ENCODE measurements at regions of chr7 and their contacts with region 1.

Region 1: GRCh38 chr7:94374231-94374630 is 20.5 kb upstream of the COL1A2 start:
- DNase-seq: peak; percentile 93 to 95
- ATAC-seq: peak; percentile 93
- H3K4me3 ChIP-seq: peak overlapping the region in 1 of 2 donors; percentile 54
- H3K27ac ChIP-seq: peak overlapping the region; percentile 28 to 97
- H3K4me1 ChIP-seq: peaks cover 0 to 15% of the 10 kb centered on the region in 2 donors
- H3K27me3 ChIP-seq: no peaks in the 10 kb centered on the region

Region 2: GRCh38 chr7:94295850-94296249 is 78.4 kb before region 1 on chr7:
- intact Hi-C with region 1: loop called (anchors 2 kb)
- DNase-seq: no peak
- ATAC-seq: peak; percentile 85
- H3K4me3 ChIP-seq: peak overlapping the region in 1 of 2 donors; percentile 29
- H3K27ac ChIP-seq: peak overlapping the region; percentile 76 to 99
- H3K4me1 ChIP-seq: peaks cover 8 to 10% of the 10 kb centered on the region in 2 donors
- H3K27me3 ChIP-seq: no peaks in the 10 kb centered on the region

Region 3: DNA sequence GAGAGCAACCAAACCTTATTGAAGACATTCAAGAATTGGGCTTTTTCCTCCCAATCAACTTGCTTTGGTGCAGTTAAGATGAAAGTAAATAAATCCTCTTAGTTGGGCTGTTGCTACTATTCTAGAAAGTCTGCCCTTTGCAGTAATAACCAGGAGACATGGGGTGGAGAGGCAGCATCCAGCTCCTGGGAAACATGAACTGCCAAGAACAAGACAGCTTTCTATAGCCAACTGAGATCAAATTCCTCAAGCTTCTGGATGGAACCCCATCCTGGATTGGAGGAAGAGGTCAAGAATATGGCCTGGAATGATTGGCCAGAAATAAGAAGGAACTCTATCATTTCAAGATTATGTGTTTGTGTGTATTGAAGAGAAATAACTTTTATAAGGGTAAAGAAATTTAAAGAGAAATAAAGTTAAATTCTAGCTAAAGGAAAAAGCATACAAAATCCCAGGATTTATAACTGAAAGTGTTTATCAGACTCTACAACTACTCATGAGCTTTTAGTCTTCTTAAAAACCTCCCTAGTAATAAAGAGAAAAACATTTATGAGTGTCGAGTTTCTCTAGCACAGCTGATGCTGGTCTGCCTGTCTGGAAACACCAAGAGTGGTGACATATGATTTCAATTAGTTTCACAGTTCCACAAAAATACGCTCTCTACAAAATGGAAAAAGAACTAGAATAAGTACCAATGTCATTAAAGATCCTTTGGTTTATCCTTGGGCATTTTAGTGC is 49.7 kb before region 1 on chr7:
- intact Hi-C with region 1: no loop called
- DNase-seq: no peak
- ATAC-seq: no peak
- H3K4me3 ChIP-seq: no peak overlapping the region
- H3K27ac ChIP-seq: no peak overlapping the region
- H3K4me1 ChIP-seq: peaks cover 1 to 2% of the 10 kb centered on the region in 2 donors
- H3K27me3 ChIP-seq: no peaks in the 10 kb centered on the region

Measured in aorta (tissue), 5 donors.